PC-3 (cell line): ENCODE measurements at regions of chr20 and their contacts with region 1.

Region 1: GRCh38 chr20:50153485-50154377 is at the start of gene PEDS1:
- DNase-seq: peak; percentile 98
- ATAC-seq: peak; percentile 93
- H3K4me3 ChIP-seq: peak within 1 kb of the TSS; percentile 76
- H3K27ac ChIP-seq: peak within 1 kb of the TSS; percentile 31
- H3K4me1 ChIP-seq: peaks cover 38% of the 10 kb centered on the region
- H3K27me3 ChIP-seq: no peaks in the 10 kb centered on the region
- CTCF ChIP-seq: no peak
- total RNA-seq, gene PEDS1: 53.8 and 59.1 TPM in 2 replicates

Region 2: GRCh38 chr20:50054626-50055511 is 98.9 kb before region 1 on chr20:
- CTCF ChIA-PET with region 1: no interaction called
- POLR2A ChIA-PET with region 1: no interaction called
- intact Hi-C with region 1: no loop called
- DNase-seq: no peak
- ATAC-seq: no peak
- H3K4me3 ChIP-seq: no peak overlapping the region
- H3K27ac ChIP-seq: no peak overlapping the region
- H3K4me1 ChIP-seq: peaks cover 8% of the 10 kb centered on the region; the same call in 1 of the 2 replicates
- H3K27me3 ChIP-seq: no peaks in the 10 kb centered on the region
- CTCF ChIP-seq: no peak

Region 3: GRCh38 chr20:50120897-50121693 is 32.6 kb before region 1 on chr20:
- CTCF ChIA-PET with region 1: interaction called, 12 read pairs
- POLR2A ChIA-PET with region 1: interaction called, 8 read pairs
- intact Hi-C with region 1: loop called (anchors 1 kb)
- DNase-seq: peak; percentile 87
- ATAC-seq: peak; percentile 82
- H3K4me3 ChIP-seq: no peak overlapping the region
- H3K27ac ChIP-seq: no peak overlapping the region
- H3K4me1 ChIP-seq: peaks cover 14% of the 10 kb centered on the region
- H3K27me3 ChIP-seq: no peaks in the 10 kb centered on the region
- CTCF ChIP-seq: peak; percentile 98

Region 4: DNA sequence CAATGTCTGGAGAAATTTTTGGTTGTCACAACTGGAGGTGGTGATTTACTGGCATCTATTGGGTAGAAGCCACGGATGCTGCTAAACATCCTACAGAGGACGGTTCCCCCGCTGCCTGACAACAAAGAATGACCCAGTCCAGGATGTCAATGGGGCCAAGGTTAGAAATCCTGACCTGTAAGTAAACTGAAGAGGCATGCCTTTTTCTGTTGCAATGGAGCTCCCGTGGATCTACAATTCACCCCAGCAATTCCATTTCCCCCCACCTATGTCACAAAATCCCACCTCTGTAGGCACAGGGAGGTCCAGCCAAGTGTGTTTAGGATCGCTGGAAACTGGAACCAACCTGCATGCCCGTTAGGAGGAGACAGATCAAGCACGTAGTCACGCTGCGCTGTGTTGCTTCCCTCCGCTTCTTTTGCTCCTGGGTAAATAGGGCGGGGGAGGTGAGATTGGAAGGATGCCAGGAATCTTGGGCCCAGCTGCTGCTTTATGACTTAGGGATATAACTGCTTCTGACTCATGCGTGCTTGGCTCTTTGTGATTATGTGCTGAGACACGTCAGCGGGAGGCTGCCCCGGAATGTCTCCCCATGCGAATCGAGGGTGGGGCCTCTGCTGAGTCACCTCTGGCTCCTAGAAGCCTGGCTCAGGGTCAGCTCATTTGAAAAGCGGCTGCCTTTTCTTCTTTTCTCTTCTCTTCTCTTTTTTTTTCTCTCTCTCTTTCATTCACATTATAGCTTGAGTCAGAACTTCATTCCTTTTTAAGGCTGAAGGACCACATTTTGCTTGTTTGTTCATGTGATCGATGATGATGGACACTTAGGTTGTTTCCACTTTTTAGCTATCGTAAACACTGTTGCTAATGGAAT is 12.2 kb after region 1 on chr20:
- CTCF ChIA-PET with region 1: interaction called, 10 read pairs
- POLR2A ChIA-PET with region 1: interaction called, 12 read pairs
- intact Hi-C with region 1: loop called (anchors 2 kb)
- DNase-seq: peak; percentile 100
- ATAC-seq: peak; percentile 89
- H3K4me3 ChIP-seq: peak overlapping the region; percentile 66
- H3K27ac ChIP-seq: peak overlapping the region; percentile 81
- H3K4me1 ChIP-seq: peaks cover 42% of the 10 kb centered on the region
- H3K27me3 ChIP-seq: no peaks in the 10 kb centered on the region
- CTCF ChIP-seq: peak; percentile 15; the same call in 1 of the 2 replicates

Region 5: GRCh38 chr20:50179507-50180016 is 25.8 kb after region 1 on chr20:
- CTCF ChIA-PET with region 1: interaction called, 12 read pairs
- POLR2A ChIA-PET with region 1: no interaction called
- intact Hi-C with region 1: no loop called
- DNase-seq: no peak
- ATAC-seq: no peak; the same call in 1 of the 2 replicates
- H3K4me3 ChIP-seq: no peak overlapping the region
- H3K27ac ChIP-seq: no peak overlapping the region
- H3K4me1 ChIP-seq: no peaks in the 10 kb centered on the region
- H3K27me3 ChIP-seq: no peaks in the 10 kb centered on the region
- CTCF ChIP-seq: no peak

Region 6: DNA sequence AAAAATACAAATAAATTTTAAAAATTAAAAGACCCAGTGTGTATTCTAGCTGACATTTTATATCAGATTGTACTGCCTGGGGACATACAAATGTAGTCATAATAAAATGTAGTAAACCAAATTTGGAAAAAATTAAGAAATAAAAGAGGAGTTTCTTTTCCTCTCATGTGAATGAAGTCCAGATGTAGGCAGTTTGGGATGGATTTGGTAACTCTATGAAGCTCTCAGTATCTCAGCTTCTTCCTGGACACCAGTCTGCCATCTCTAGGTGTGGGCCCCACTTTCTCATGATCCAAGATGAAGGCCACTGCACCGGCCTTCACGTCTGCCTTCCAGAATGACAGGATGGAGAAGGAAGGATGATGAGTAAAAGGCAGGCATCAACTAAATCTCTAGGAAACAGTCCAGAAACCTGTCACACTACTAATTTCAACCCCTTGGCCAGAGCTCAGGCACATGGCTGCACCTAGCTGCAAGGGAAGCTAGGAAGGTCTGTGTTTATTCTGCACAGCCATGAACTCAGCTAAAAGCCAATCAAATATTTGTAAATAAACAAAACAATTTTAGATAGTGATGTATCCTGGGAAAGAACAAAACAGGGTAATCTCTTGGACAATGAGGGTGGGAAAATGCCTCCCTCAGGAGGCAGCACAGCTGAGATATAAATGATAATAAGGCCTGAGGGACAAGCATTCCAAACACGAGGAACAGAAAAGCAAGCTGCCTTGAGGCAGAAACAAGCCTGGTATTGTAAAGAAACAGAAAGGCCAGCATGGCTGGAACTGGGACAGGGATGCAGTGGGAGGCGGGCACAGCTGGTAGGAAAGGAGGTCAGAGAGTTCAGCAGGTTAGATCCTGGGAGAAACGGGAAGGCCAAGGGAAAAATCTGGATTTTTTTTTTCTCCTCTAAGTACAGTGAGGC is 267.9 kb after region 1 on chr20:
- CTCF ChIA-PET with region 1: no interaction called
- POLR2A ChIA-PET with region 1: interaction called, 12 read pairs
- intact Hi-C with region 1: no loop called
- DNase-seq: no peak
- ATAC-seq: no peak
- H3K4me3 ChIP-seq: no peak overlapping the region
- H3K27ac ChIP-seq: peak overlapping the region; percentile 96
- H3K4me1 ChIP-seq: peaks cover 34% of the 10 kb centered on the region
- H3K27me3 ChIP-seq: no peaks in the 10 kb centered on the region
- CTCF ChIP-seq: no peak

Region 7: DNA sequence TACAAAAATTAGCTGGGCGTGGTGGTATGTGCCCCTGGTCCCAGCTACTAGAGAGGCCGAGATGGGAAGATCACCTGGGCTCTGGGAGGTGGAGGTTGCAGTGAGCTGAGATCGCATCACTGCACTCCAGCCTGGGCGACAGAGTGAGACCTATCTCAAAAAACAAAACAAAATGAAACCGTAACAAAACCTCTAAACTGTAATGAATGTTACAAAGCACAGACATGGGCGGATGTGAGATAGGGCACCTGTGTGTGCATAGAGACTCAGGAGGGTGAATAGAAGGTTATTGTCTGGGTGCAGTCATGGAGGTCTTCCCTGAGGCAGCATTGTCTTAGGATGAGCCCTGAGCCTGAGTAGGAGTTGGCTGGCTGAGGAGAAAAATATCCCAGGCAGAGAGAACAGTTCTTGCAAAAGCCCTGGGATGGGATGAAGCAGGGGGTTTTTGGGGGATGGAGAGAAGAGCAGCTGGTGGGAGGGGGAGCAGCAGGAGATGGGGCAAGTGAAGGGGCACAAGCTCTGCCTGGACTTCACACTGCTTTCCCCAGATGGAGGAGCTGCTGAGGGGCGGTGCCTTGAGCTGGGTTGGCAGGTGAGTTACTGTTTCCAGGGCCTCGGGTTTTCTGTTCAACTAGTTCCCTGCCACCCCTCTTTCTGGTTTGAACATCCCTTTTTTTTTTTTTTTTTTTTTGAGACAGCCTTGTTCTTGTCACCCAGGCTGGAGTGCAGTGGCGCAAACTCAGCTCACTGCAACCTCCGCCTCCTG is 646.3 kb after region 1 on chr20:
- CTCF ChIA-PET with region 1: no interaction called
- POLR2A ChIA-PET with region 1: no interaction called
- intact Hi-C with region 1: no loop called
- DNase-seq: no peak
- ATAC-seq: no peak
- H3K4me3 ChIP-seq: no peak overlapping the region
- H3K27ac ChIP-seq: no peak overlapping the region
- H3K4me1 ChIP-seq: peaks cover 8% of the 10 kb centered on the region; the same call in 1 of the 2 replicates
- H3K27me3 ChIP-seq: no peaks in the 10 kb centered on the region
- CTCF ChIP-seq: no peak